Lower leg skin (tissue), 4 donors: ENCODE measurements at regions of chr15 and their contacts with region 1.

Region 1: GRCh38 chr15:40274350-40275274 is 8.3 kb downstream of the ANKRD63 start:
- DNase-seq: peak; percentile 67 to 94
- H3K4me3 ChIP-seq: no peak overlapping the region
- CTCF ChIP-seq: peak in 1 of 3 donors; percentile 99
- POLR2A ChIP-seq: no peak

Region 2: DNA sequence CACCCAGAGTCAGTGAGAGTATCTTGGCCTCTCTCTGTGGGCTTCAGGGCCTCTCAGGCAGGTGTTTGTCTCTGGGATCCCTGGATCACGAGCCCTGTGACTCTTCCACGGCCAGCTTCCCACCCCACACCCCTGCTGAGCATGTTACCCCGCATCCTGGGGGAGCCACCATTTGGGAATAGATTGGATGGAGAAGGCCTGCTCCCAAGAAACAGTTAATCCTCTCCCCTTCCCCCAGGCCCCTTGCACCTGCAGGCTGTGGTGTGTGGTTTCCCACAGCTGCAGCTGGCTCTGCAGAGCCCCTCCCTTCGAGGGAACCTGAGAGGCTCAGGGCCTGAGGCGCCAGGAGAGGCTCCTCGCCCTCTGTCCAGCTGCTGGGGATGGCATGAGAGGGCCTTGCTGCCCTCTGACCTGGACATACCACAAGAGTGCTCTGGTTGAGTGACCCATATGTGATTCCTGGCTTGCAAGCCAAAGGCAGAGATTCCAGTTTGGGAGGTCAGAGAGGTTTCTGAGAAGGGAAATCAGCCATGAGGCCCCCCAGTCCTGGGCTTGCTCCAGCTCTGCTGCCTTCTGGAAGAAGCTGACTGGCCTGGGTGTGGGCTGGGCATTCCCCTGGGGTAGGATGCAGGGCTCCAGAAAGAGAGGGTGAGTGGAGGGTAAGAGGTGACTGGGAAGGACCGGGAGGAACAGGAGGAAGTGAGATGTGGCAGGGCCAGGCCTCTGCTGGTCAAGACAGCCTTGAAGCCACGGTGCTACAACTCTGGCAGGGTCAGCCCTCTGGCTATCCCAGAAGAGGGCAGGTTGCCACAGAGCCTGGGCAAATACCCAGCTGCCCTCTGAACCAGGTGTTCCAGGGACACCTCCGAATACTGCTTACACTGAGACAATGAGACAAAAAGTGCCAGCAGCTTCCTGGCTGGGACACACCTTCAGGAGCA is 219.7 kb before region 1 on chr15:
- intact Hi-C with region 1: loop called (anchors 5 kb)
- DNase-seq: peak in 1 of 2 donors; percentile 82
- H3K4me3 ChIP-seq: no peak overlapping the region
- CTCF ChIP-seq: no peak
- POLR2A ChIP-seq: no peak

Region 3: DNA sequence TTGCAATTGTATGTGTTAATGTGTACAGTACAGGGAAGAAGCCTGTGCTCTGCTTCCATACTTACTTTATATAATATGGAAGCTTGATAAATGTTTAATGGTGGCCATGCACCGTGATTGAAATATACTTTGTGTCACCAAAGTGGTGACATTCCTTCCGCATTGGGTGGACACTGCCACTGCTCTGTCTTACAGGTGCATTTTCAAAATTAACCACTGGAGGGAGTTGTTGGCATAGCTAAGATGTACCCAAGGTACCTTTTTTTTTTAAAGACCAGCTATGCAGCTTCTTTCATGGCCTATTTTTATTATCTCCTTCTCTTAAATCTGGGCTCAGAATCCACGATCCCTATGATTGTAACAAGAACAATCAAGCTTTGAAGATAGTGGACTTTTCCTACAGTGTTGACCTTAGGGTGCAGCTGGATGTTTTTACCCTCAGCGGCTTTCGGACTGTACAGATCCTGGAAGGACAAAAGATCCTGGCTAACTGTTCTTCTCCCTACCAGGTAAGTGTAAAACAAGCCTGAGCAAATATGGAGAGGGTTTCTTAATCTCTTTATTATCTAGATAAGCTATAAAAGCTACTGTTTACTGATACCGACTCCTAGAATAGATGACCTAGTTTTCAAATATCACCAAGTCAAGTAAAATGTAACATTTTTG is 57.3 kb before region 1 on chr15:
- intact Hi-C with region 1: loop called (anchors 5 kb)
- DNase-seq: peak in 1 of 2 donors; percentile 57
- H3K4me3 ChIP-seq: no peak overlapping the region
- CTCF ChIP-seq: no peak
- POLR2A ChIP-seq: no peak